ENCODE measurements at regions of chr20 and their contacts with region 1.

Region 1: DNA sequence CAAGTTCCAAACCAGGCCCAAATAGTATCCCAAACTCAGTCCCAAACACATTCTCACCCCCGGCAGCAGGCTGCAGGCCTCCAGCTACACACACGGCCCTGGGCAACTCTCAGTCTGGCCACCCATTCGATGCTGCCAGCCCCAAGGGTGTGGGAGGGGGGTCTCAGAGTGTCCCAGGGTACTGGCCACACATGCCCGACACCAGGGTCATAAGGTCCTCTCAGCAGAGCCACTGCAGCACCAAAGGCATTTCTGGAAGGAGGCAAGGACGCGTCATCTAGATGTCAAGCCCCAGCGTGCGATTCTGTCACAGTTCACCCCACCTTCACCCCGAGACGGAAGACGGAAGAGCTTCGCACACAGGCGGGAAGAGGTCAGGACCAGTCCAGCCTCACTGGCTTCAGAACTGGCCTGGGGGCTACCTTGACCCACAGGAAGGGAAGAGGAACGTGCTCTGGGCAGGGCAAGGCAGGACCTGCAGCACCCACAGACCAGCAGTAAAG is 9.5 kb downstream of the MYL9 start:
- DNase-seq: no peak
- H3K4me3 Mint-ChIP-seq: no peak overlapping the region
- H3K27ac Mint-ChIP-seq: no peak overlapping the region
- H3K4me1 Mint-ChIP-seq: no peaks in the 10 kb centered on the region
- H3K27me3 Mint-ChIP-seq: peaks cover 12% of the 10 kb centered on the region
- CTCF ChIP-seq: no peak

Region 2: DNA sequence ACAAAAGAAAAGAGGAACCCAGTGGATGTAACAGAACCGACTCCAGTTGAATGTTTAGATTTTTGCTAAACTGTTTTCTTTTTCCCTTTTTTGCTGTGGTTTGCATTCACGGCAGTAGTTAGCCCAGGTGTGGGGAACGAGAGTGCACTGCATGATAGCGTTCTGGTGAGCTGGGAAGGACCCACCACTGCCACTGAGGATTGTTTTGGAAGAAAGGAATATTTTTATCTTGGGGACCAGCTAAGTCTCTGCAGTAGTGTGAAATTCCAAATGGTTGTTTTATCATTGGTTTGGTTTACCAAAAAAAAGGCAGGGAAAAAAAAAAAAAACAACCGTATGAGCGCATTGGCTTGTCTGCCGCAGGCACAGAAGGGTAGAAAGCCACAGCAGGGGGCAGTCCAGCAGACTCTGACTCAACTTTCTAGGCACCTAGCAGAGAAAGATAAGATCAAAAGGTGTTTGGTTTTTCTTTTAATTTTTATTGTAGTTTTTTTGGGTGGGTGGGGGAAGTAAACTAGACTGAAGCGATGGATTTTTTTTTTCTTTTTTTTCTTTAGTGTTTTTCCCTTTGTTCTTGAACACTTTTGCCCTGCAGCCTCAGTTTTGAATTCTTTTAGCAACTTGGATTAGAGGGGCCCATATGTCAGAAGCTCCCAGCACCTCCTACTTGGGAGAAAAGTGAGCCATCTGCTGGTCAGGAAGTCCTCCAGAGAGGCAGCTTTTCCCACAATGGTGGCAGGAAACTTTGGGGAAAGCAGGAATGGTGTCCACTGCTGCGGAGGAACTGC is 41.2 kb after region 1 on chr20:
- CTCF ChIA-PET with region 1: no interaction called
- intact Hi-C with region 1: loop called (anchors 1 kb)
- DNase-seq: peak; percentile 34
- H3K4me3 Mint-ChIP-seq: no peak overlapping the region
- H3K27ac Mint-ChIP-seq: no peak overlapping the region
- H3K4me1 Mint-ChIP-seq: no peaks in the 10 kb centered on the region
- H3K27me3 Mint-ChIP-seq: no peaks in the 10 kb centered on the region
- CTCF ChIP-seq: peak; percentile 24